Panc1 (cell line): ENCODE measurements at regions of chr5 and their contacts with region 1.

Region 1: GRCh38 chr5:77607324-77607723 is 31.2 kb downstream of the OTP start:
- DNase-seq: no peak
- ATAC-seq: no peak
- H3K4me3 ChIP-seq: no peak overlapping the region
- H3K27ac ChIP-seq: no peak overlapping the region
- H3K4me1 ChIP-seq: no peaks in the 10 kb centered on the region
- H3K27me3 ChIP-seq: peaks cover 9% of the 10 kb centered on the region
- CTCF ChIP-seq: no peak

Region 2: DNA sequence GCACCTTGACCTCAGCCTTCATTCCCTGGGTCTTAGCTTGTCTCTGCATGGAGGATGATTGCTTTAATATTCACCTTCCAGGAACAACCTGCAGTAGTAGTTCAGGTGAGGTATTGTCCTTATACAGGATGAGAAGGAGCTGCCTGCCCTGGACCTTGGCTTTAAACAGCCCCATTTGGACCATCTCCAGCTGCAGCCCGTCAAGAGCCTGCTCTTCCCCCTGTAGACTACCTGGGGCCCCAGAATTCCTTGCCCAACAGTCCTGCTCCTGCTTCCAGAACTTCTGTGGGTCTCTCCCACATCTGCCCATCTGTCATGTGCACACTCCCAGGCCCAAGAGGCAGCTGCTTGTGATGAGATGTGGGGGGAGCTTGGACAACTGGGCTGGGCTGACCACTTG is 43.4 kb after region 1 on chr5:
- CTCF ChIA-PET with region 1: no interaction called
- POLR2A ChIA-PET with region 1: no interaction called
- in situ Hi-C with region 1: no loop called
- intact Hi-C with region 1: no loop called
- DNase-seq: no peak
- ATAC-seq: no peak
- H3K4me3 ChIP-seq: no peak overlapping the region
- H3K27ac ChIP-seq: no peak overlapping the region
- H3K4me1 ChIP-seq: no peaks in the 10 kb centered on the region
- H3K27me3 ChIP-seq: peaks cover 4% of the 10 kb centered on the region; the same call in 1 of the 2 replicates
- CTCF ChIP-seq: no peak

Region 3: GRCh38 chr5:77696120-77696519 is 88.8 kb after region 1 on chr5:
- CTCF ChIA-PET with region 1: no interaction called
- POLR2A ChIA-PET with region 1: interaction called, 10 read pairs
- in situ Hi-C with region 1: no loop called
- intact Hi-C with region 1: no loop called
- DNase-seq: no peak
- ATAC-seq: no peak
- H3K4me3 ChIP-seq: no peak overlapping the region
- H3K27ac ChIP-seq: no peak overlapping the region
- H3K4me1 ChIP-seq: no peaks in the 10 kb centered on the region
- H3K27me3 ChIP-seq: no peaks in the 10 kb centered on the region
- CTCF ChIP-seq: no peak